ENCODE measurements at regions of chr4 and their contacts with region 1.

Region 1: GRCh38 chr4:13640149-13640940 is 12.8 kb upstream of the BOD1L1 start:
- DNase-seq: peak; percentile 54
- H3K4me3 ChIP-seq: no peak overlapping the region
- H3K27me3 ChIP-seq: peaks cover 2% of the 10 kb centered on the region
- CTCF ChIP-seq: no peak

Region 2: DNA sequence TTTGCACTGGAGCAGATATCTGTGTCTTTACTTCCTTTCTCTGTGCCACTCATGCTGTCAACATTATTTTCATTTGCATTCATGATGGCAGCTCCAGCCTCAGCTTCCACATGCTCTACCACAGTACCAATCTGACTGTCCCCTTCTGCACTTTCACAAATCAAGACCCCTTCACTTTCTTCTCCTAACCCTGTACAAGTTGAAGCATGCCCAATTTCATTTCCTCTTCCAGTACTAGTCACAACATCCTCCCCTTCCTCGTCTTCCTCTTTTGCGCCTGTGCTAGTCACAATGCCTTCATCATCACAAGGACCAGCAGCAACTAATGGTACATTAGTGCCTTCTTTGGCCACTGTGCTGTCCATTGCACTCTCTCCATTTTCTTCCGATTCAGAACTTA is 39.3 kb before region 1 on chr4:
- CTCF ChIA-PET with region 1: no interaction called
- POLR2A ChIA-PET with region 1: no interaction called
- DNase-seq: no peak
- H3K4me3 ChIP-seq: no peak overlapping the region
- H3K27me3 ChIP-seq: no peaks in the 10 kb centered on the region
- CTCF ChIP-seq: no peak

Region 3: GRCh38 chr4:13654158-13654797 is 13.9 kb after region 1 on chr4:
- CTCF ChIA-PET with region 1: interaction called, 83 read pairs
- POLR2A ChIA-PET with region 1: no interaction called
- DNase-seq: no peak
- H3K4me3 ChIP-seq: peak overlapping the region; percentile 52
- H3K27me3 ChIP-seq: no peaks in the 10 kb centered on the region
- CTCF ChIP-seq: peak; percentile 95

Measured in BJ (cell line).